Mammary epithelial cell (primary cell): ENCODE measurements at regions of chr11 and their contacts with region 1.

Region 1: DNA sequence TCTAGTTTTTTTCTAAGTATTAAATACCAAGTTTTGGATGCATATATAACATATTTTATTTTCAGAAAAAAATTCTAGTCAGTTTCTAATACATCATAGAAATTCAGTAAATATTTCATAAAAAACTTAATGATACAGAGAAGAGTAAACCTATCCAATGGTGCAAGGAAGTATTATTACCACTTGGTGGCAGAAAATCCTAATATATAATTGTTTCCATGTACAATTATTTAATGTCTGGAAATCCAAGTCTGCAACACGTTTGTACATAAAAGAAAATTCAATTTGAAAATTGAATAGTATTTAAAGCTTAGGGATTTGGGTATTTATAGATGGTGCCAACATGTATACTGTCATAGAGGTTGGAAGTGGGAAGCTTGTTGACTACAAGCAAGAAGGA is 127.0 kb downstream of the TRPC6 start:
- DNase-seq: no peak
- H3K4me3 ChIP-seq: no peak overlapping the region
- H3K27ac ChIP-seq: no peak overlapping the region
- H3K4me1 ChIP-seq: no peaks in the 10 kb centered on the region
- H3K27me3 ChIP-seq: no peaks in the 10 kb centered on the region
- CTCF ChIP-seq: peak; percentile 41 to 46

Region 2: DNA sequence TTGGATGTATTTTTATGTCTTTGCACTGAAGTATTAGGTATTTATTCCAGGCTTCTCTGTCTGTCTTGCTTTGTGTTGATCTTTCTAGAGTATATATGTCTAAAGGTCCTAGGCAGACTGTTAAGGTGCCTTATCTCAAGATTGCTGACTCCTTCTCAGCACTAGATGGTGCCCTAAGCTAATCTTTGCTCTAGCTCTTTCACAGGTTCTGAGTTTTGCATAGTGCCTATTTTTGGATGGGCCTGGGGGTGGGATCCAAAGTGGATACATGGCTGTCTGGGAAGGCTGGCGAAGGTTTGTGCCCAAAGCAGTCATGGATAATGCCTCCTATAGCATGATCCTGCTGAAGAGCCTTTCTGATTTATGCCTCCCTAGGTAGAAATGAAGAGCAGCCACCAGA is 27.9 kb before region 1 on chr11:
- CTCF ChIA-PET with region 1: no interaction called
- dilution Hi-C with region 1: no loop called
- in situ Hi-C with region 1: no loop called
- intact Hi-C with region 1: loop called (anchors 2 kb)
- DNase-seq: peak; percentile 30
- H3K4me3 ChIP-seq: no peak overlapping the region
- H3K27ac ChIP-seq: no peak overlapping the region
- H3K4me1 ChIP-seq: peaks cover 9% of the 10 kb centered on the region
- H3K27me3 ChIP-seq: no peaks in the 10 kb centered on the region
- CTCF ChIP-seq: peak; percentile 65 to 68

Region 3: GRCh38 chr11:101617735-101618332 is 161.0 kb after region 1 on chr11:
- CTCF ChIA-PET with region 1: interaction called, 3 read pairs
- dilution Hi-C with region 1: no loop called
- in situ Hi-C with region 1: no loop called
- intact Hi-C with region 1: loop called (anchors 1 kb)
- DNase-seq: peak; percentile 85
- H3K4me3 ChIP-seq: no peak overlapping the region
- H3K27ac ChIP-seq: peak overlapping the region; percentile 92
- H3K4me1 ChIP-seq: peaks cover 22% of the 10 kb centered on the region
- H3K27me3 ChIP-seq: no peaks in the 10 kb centered on the region
- CTCF ChIP-seq: no peak

Region 4: DNA sequence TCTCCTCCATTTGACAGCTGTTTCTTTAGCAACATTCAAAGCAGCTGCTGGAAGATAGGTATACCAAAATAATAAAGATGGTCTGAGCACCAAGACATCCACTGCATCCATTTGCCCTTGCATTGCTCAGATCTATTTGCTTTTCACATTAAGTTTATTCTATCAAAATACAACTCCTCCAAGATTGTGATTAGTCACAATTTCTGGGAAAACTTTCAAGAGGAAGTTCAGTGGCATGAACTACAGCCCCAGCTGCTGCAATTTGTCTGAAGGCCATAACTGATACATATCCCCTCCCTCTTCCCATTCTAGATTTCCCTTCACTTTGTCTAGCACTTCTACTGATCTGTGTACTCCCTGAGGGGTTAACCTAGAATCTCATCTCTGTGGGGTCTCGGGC is 340.5 kb after region 1 on chr11:
- CTCF ChIA-PET with region 1: no interaction called
- dilution Hi-C with region 1: no loop called
- in situ Hi-C with region 1: no loop called
- intact Hi-C with region 1: loop called (anchors 5 kb)
- DNase-seq: no peak
- H3K4me3 ChIP-seq: no peak overlapping the region
- H3K27ac ChIP-seq: no peak overlapping the region
- H3K4me1 ChIP-seq: no peaks in the 10 kb centered on the region
- H3K27me3 ChIP-seq: no peaks in the 10 kb centered on the region
- CTCF ChIP-seq: no peak